ENCODE measurements at regions of chr20 and their contacts with region 1.

Region 1: GRCh38 chr20:36745927-36746659 is at the start of gene NDRG3:
- DNase-seq: peak; percentile 84 to 97
- H3K4me3 ChIP-seq: peak within 1 kb of the TSS; percentile 97 to 100
- H3K27ac ChIP-seq: peak within 1 kb of the TSS; percentile 84 to 89
- H3K4me1 ChIP-seq: peaks cover 3 to 14% of the 10 kb centered on the region in 2 donors
- H3K27me3 ChIP-seq: no peaks in the 10 kb centered on the region
- CTCF ChIP-seq: peak in 2 of 3 experiments; percentile 3 to 29
- total RNA-seq, gene NDRG3: 36.9 TPM

Region 2: GRCh38 chr20:36700438-36700837 is 45.7 kb before region 1 on chr20:
- intact Hi-C with region 1: loop called (anchors 2 kb)
- DNase-seq: no peak
- H3K4me3 ChIP-seq: no peak overlapping the region
- H3K27ac ChIP-seq: no peak overlapping the region
- H3K4me1 ChIP-seq: peaks cover 4 to 35% of the 10 kb centered on the region in 2 donors
- H3K27me3 ChIP-seq: no peaks in the 10 kb centered on the region
- CTCF ChIP-seq: no peak

Region 3: DNA sequence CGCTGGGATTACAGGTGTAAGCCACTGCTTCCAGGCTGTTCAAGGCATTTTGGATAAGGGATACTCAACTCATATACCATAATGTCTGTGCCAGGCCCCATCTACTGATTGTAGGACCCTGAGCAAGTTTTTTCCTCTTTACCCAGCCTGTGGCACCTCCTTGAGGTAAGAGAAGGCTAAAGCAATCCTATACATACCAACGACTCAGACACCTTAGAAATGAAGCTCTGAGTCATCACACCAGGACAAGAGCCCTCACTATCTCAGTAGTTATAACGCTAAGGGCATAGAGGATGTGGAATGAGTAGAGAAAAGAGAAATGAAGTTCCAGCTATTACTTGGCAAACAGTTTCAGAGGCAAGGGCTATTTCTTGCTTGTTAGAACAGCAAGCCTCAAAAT is 17.1 kb before region 1 on chr20:
- intact Hi-C with region 1: no loop called
- DNase-seq: no peak
- H3K4me3 ChIP-seq: no peak overlapping the region
- H3K27ac ChIP-seq: no peak overlapping the region
- H3K4me1 ChIP-seq: peaks cover 0 to 10% of the 10 kb centered on the region in 2 donors
- H3K27me3 ChIP-seq: no peaks in the 10 kb centered on the region
- CTCF ChIP-seq: no peak

Region 4: GRCh38 chr20:36773597-36774390 is 27.7 kb after region 1 on chr20 and contains the start of gene DSN1:
- intact Hi-C with region 1: loop called (anchors 1 kb)
- DNase-seq: peak; percentile 92 to 99
- H3K4me3 ChIP-seq: peak within 1 kb of the TSS; percentile 72 to 85
- H3K27ac ChIP-seq: peak within 1 kb of the TSS; percentile 97 to 98
- H3K4me1 ChIP-seq: peaks cover 3 to 19% of the 10 kb centered on the region in 2 donors
- H3K27me3 ChIP-seq: no peaks in the 10 kb centered on the region
- CTCF ChIP-seq: peak in 1 of 3 experiments; percentile 60
- total RNA-seq, gene DSN1: 26.9 TPM

Region 5: GRCh38 chr20:36845288-36845971 is 99.3 kb after region 1 on chr20:
- intact Hi-C with region 1: no loop called
- DNase-seq: no peak
- H3K4me3 ChIP-seq: no peak overlapping the region
- H3K27ac ChIP-seq: peak overlapping the region; percentile 93 to 98
- H3K4me1 ChIP-seq: peaks cover 24 to 46% of the 10 kb centered on the region in 2 donors
- H3K27me3 ChIP-seq: no peaks in the 10 kb centered on the region
- CTCF ChIP-seq: no peak